ENCODE measurements at regions of chr1 and their contacts with region 1.

Region 1: GRCh38 chr1:229913489-229913888 is 153.5 kb upstream of the GALNT2 start:
- DNase-seq: no peak
- H3K4me3 Mint-ChIP-seq: no peak overlapping the region
- H3K27ac Mint-ChIP-seq: no peak overlapping the region
- H3K4me1 Mint-ChIP-seq: no peaks in the 10 kb centered on the region
- H3K27me3 Mint-ChIP-seq: peaks cover 12% of the 10 kb centered on the region

Region 2: DNA sequence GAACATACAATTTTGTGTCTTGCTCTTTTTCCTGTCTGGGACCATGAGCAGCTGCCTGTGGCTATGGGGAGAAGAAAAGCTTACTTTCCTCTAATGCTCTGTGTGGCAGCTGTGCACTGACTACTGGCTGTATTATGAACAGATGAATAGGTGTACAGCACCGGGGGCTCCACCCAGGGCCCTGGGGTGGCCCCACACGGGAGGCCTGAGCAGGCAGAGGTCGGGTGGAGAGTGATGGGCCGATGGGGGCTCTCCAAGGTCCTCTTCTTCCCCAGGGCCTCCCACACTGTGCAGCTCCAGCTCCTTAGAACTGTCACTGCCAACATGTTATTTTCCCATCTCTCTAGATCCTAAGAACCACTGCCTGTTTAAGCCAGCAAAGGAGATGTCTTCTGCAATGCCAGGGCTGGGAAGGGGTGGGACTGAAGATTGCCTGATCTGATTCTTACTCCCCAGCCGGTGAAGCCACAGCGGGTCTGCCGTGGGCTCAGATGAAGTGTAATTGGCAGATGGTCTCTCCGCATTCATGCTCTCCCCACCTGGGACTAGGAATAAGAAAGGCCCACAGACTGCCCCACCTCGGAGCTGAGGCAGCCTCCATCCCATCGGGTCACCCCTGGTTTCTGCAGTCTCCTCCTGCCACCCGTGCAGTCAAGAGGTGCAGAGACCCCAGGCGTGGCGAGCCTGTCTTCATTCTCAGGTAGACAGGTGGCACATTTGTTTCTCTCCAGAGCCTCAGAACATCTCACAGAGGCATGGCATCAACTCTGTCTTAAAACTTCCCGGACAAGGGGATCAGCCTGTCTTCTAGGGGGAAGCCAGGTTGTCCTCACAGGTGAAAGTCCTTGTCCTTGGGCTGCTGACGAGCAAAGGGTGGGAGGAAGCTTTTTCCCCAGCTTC is 33.0 kb before region 1 on chr1:
- intact Hi-C with region 1: loop called (anchors 1 kb)
- DNase-seq: no peak
- H3K4me3 Mint-ChIP-seq: no peak overlapping the region
- H3K27ac Mint-ChIP-seq: no peak overlapping the region
- H3K4me1 Mint-ChIP-seq: no peaks in the 10 kb centered on the region
- H3K27me3 Mint-ChIP-seq: peaks cover 25% of the 10 kb centered on the region